Naive thymus-derived CD4-positive, alpha-beta T cell (primary cell): ENCODE measurements at regions of chr1 and their contacts with region 1.

Region 1: DNA sequence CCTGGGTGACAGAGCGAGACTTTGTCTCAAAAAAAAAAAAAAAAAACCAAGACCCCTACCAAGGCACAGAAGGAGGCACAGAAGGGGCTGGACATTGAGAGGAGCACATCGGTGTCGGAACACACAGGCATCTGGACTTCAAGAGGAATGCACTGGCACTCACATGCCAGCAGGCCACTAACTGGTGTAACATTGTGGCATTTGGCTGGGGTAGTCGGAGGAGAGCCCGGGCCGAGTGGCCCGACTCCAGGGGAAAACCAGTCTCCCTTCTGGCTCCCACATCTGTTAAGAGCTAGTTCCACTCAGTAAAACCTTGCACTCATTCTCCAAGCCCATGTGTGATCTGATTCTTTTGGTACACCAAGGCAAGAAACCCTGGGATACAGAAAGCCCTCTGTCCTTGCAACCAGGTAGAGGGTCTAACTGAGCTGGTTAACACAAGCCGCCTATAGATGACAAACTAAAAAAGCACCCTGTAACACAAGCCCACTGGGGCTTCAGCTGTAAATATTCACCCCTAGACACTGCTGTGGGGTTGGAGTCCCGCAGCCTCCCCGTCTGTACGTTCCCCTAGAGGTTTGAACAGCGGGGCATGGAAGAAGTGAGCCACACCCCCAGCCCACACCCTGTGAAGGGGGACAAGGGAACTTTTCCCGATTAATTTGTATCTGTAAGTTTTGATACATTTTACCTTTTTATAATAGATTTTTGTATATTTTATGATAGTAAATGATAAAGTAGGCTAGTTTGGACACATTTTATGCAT is 17.2 kb upstream of the AKIRIN1 start:
- DNase-seq: no peak
- ATAC-seq: no peak
- H3K4me3 ChIP-seq: no peak overlapping the region
- H3K4me3 Mint-ChIP-seq: no peak overlapping the region
- H3K27ac ChIP-seq: no peak overlapping the region
- H3K27ac Mint-ChIP-seq: peak overlapping the region in 1 of 9 donors; percentile 38
- H3K4me1 ChIP-seq: peaks cover 0 to 14% of the 10 kb centered on the region in 2 donors
- H3K4me1 Mint-ChIP-seq: peaks cover 2 to 25% (median 15%) of the 10 kb centered on the region in 7 donors
- H3K27me3 ChIP-seq: no peaks in the 10 kb centered on the region
- H3K27me3 Mint-ChIP-seq: peaks cover 0 to 2% (median 0%) of the 10 kb centered on the region in 5 donors

Region 2: DNA sequence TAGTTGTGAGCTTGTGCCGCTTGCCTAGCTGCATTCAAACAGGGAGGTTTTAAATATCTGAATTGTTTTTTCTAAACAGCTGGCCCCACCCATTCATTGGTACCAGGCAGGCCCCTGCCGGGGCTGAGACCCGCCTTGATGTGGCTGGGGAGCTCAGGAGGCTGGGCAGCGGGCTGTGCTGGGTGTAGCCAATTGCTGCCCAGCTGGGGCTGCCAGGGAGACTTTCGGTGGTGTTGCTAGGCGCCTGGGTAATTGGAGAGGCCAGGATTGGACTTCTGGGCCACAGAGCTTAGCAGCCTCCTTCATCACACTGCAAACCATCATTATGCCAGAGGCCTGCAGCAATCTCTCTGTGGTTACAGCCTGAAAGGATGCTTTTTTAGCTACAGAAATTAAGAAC is 44.4 kb before region 1 on chr1:
- CTCF ChIA-PET with region 1: no interaction called
- POLR2A ChIA-PET with region 1: no interaction called
- intact Hi-C with region 1: no loop called
- DNase-seq: no peak
- ATAC-seq: no peak
- H3K4me3 ChIP-seq: no peak overlapping the region
- H3K4me3 Mint-ChIP-seq: no peak overlapping the region
- H3K27ac ChIP-seq: no peak overlapping the region
- H3K27ac Mint-ChIP-seq: no peak overlapping the region
- H3K4me1 ChIP-seq: no peaks in the 10 kb centered on the region
- H3K4me1 Mint-ChIP-seq: no peaks in the 10 kb centered on the region
- H3K27me3 ChIP-seq: no peaks in the 10 kb centered on the region
- H3K27me3 Mint-ChIP-seq: no peaks in the 10 kb centered on the region

Region 3: GRCh38 chr1:38997034-38997900 is 23.4 kb after region 1 on chr1:
- CTCF ChIA-PET with region 1: no interaction called
- POLR2A ChIA-PET with region 1: interaction called, 18 read pairs
- intact Hi-C with region 1: no loop called
- DNase-seq: peak in 6 of 9 donors; percentile 31 to 66 (median 54)
- ATAC-seq: peak; percentile 66
- H3K4me3 ChIP-seq: peak overlapping the region; percentile 0
- H3K4me3 Mint-ChIP-seq: peak overlapping the region; percentile 63 to 89 (median 77)
- H3K27ac ChIP-seq: peak overlapping the region; percentile 59
- H3K27ac Mint-ChIP-seq: peak overlapping the region; percentile 61 to 93 (median 87)
- H3K4me1 ChIP-seq: peaks cover 25 to 52% of the 10 kb centered on the region in 2 donors
- H3K4me1 Mint-ChIP-seq: peaks cover 27 to 76% (median 65%) of the 10 kb centered on the region in 7 donors
- H3K27me3 ChIP-seq: no peaks in the 10 kb centered on the region
- H3K27me3 Mint-ChIP-seq: no peaks in the 10 kb centered on the region

Region 4: GRCh38 chr1:39026051-39026865 is 52.4 kb after region 1 on chr1 and contains the start of gene NDUFS5:
- CTCF ChIA-PET with region 1: no interaction called
- POLR2A ChIA-PET with region 1: interaction called, 16 read pairs
- intact Hi-C with region 1: loop called in 1 of 2 experiments (anchors 10 kb)
- DNase-seq: peak; percentile 53 to 84 (median 80)
- ATAC-seq: peak; percentile 96
- H3K4me3 ChIP-seq: peak within 1 kb of the TSS; percentile 93
- H3K4me3 Mint-ChIP-seq: peak within 1 kb of the TSS; percentile 90 to 100 (median 96)
- H3K27ac ChIP-seq: peak within 1 kb of the TSS; percentile 94
- H3K27ac Mint-ChIP-seq: peak within 1 kb of the TSS; percentile 93 to 99 (median 97)
- H3K4me1 ChIP-seq: peaks cover 18% of the 10 kb centered on the region in 2 donors
- H3K4me1 Mint-ChIP-seq: peaks cover 19 to 37% (median 28%) of the 10 kb centered on the region in 7 donors
- H3K27me3 ChIP-seq: no peaks in the 10 kb centered on the region
- H3K27me3 Mint-ChIP-seq: peaks cover 0 to 6% (median 0%) of the 10 kb centered on the region in 5 donors
- total RNA-seq, gene NDUFS5: 95.1 to 128 (median 115) TPM